CD8-positive, alpha-beta memory T cell (primary cell): ENCODE measurements at regions of chr19 and their contacts with region 1.

Region 1: DNA sequence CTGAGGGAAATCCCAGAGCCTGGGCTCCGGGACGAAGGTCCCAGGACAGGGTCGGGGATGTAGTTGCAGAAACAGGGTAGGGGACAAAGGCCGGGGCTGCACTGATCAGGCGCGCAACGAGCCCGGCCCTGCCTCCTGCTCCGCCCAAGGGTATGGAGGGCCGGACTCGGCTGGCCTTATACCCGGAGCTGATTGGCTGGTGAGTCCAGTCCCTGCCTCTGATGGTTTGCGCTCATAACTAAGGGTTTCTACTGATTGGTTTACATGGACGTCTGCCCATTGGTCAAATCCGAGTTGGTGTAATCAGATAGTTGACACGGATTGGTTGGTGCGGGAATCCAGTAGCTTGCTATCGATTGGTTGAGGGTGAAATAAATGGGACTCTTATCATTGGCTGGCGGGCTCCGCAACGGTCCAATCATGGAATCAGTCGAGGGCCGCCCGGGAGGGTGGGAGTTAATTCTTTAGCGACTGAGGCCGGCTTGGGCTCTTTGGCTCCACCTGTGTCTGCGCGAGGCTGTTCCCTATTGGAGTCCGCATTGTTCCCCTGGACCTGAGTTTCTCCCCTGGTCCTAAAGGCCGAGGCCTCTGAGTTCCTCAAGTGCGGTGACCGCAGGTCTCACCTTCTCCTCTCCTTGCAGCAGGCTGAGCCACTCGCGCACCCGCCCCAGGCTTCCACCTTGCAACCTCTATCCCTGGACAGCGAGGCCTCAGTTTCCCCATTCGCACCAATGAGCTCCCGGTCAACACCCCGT is 570 bp upstream of the MPND start:
- DNase-seq: peak; percentile 83 to 95 (median 92)
- H3K4me3 ChIP-seq: peak overlapping the region; percentile 92
- H3K4me3 Mint-ChIP-seq: peak overlapping the region; percentile 80 to 96 (median 91)
- H3K27ac ChIP-seq: peak overlapping the region; percentile 80
- H3K27ac Mint-ChIP-seq: peak overlapping the region; percentile 82 to 99 (median 92)
- H3K4me1 ChIP-seq: peaks cover 22% of the 10 kb centered on the region
- H3K4me1 Mint-ChIP-seq: peaks cover 29 to 46% (median 38%) of the 10 kb centered on the region in 3 donors
- H3K27me3 ChIP-seq: no peaks in the 10 kb centered on the region
- H3K27me3 Mint-ChIP-seq: peaks cover 0 to 3% of the 10 kb centered on the region in 2 donors

Region 2: GRCh38 chr19:4278419-4279266 is 64.1 kb before region 1 on chr19 and contains the start of gene SHD:
- CTCF ChIA-PET with region 1: no interaction called
- POLR2A ChIA-PET with region 1: no interaction called
- DNase-seq: no peak
- H3K4me3 ChIP-seq: no peak within 1 kb of the TSS
- H3K4me3 Mint-ChIP-seq: peak within 1 kb of the TSS in 6 of 7 donors; percentile 14 to 77 (median 27)
- H3K27ac ChIP-seq: no peak within 1 kb of the TSS
- H3K27ac Mint-ChIP-seq: peak within 1 kb of the TSS in 2 of 8 donors; percentile 21 to 31
- H3K4me1 ChIP-seq: no peaks in the 10 kb centered on the region
- H3K4me1 Mint-ChIP-seq: peaks cover 0 to 6% (median 2%) of the 10 kb centered on the region in 3 donors
- H3K27me3 ChIP-seq: peaks cover 7% of the 10 kb centered on the region
- H3K27me3 Mint-ChIP-seq: peaks cover 18 to 19% of the 10 kb centered on the region in 2 donors
- total RNA-seq, gene SHD: not detected

Region 3: GRCh38 chr19:4328243-4328990 is 14.4 kb before region 1 on chr19:
- CTCF ChIA-PET with region 1: interaction called, 6 read pairs
- POLR2A ChIA-PET with region 1: interaction called, 12 read pairs
- DNase-seq: peak; percentile 78 to 96 (median 92)
- H3K4me3 ChIP-seq: peak overlapping the region; percentile 81
- H3K4me3 Mint-ChIP-seq: peak overlapping the region; percentile 80 to 91 (median 85)
- H3K27ac ChIP-seq: peak overlapping the region; percentile 38
- H3K27ac Mint-ChIP-seq: peak overlapping the region; percentile 35 to 94 (median 77)
- H3K4me1 ChIP-seq: peaks cover 11% of the 10 kb centered on the region
- H3K4me1 Mint-ChIP-seq: peaks cover 20 to 30% (median 24%) of the 10 kb centered on the region in 3 donors
- H3K27me3 ChIP-seq: no peaks in the 10 kb centered on the region
- H3K27me3 Mint-ChIP-seq: peaks cover 2 to 4% of the 10 kb centered on the region in 2 donors

Region 4: DNA sequence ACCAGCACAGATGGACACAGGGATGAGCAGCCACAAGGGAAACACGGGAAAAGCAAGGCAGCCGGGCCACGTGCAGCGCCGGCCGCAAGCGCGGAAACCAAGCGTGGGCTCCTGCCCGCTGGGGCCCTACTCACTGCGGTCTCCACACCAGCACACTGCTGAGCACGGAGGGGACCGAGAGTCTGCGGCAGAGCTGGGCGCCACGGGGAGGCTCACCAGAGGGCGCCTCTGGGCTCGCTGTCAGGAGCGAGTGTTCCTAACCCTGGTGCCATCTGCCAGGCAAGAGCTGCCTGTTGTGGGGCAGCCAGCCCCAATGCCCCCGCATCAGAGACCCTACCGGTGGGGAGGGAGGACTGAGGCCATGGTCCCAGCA is 27.1 kb after region 1 on chr19:
- CTCF ChIA-PET with region 1: interaction called, 10 read pairs
- POLR2A ChIA-PET with region 1: interaction called, 3 read pairs
- DNase-seq: peak; percentile 60 to 81 (median 63)
- H3K4me3 ChIP-seq: peak overlapping the region; percentile 75
- H3K4me3 Mint-ChIP-seq: peak overlapping the region; percentile 80 to 97 (median 90)
- H3K27ac ChIP-seq: peak overlapping the region; percentile 77
- H3K27ac Mint-ChIP-seq: peak overlapping the region; percentile 79 to 99 (median 92)
- H3K4me1 ChIP-seq: peaks cover 48% of the 10 kb centered on the region
- H3K4me1 Mint-ChIP-seq: peaks cover 29 to 52% (median 32%) of the 10 kb centered on the region in 3 donors
- H3K27me3 ChIP-seq: no peaks in the 10 kb centered on the region
- H3K27me3 Mint-ChIP-seq: peaks cover 0 to 1% of the 10 kb centered on the region in 2 donors